GM12878 (cell line): ENCODE measurements at regions of chr3 and their contacts with region 1.

Region 1: GRCh38 chr3:99172736-99173657 is 271.5 kb upstream of the DCBLD2 start:
- DNase-seq: peak; percentile 9
- ATAC-seq: peak; percentile 88
- H3K4me3 ChIP-seq: no peak overlapping the region
- H3K27ac ChIP-seq: no peak overlapping the region
- H3K4me1 ChIP-seq: no peaks in the 10 kb centered on the region
- H3K27me3 ChIP-seq: no peaks in the 10 kb centered on the region
- CTCF ChIP-seq: peak; percentile 65 to 73 (median 68)
- EP300 ChIP-seq: no peak
- POLR2A ChIP-seq: no peak
- RAD21 ChIP-seq: peak; percentile 73

Region 2: DNA sequence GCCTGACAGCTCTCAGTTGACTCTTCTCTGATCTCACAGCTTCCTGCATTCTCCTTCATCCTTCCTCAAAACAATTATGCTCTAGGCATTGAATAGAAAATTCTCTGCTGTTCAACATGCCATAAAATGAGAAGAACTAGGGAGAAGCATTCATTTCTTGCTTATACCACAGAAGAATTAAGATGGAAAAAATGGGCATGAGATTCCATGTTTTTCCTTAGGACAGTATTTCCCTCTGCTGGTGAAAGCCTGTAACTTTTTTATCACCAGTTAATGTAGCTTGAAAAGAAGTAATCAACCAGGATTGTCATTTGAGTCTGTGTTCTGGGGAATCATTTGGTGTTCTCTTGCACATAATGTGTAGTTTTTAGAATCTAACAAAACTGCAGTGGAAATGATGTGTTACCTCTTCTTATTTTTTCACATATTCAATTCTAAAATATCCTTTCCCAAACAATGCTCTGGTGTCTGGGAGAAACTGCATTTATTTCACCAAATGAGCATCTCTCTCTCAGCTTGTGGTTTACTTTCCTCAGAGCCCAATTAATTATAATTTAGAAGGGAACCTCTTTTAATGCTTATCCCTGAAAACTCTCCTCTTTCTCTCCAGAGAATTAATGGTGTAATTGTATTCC is 178.8 kb before region 1 on chr3:
- CTCF ChIA-PET with region 1: interaction called, 10 read pairs
- POLR2A ChIA-PET with region 1: no interaction called
- RAD21 ChIA-PET with region 1: no interaction called
- SMC1A ChIA-PET with region 1: no interaction called
- in situ Hi-C with region 1: no loop called
- intact Hi-C with region 1: loop called (anchors 10 kb)
- DNase-seq: no peak
- ATAC-seq: no peak
- H3K4me3 ChIP-seq: no peak overlapping the region
- H3K27ac ChIP-seq: no peak overlapping the region
- H3K4me1 ChIP-seq: no peaks in the 10 kb centered on the region
- H3K27me3 ChIP-seq: no peaks in the 10 kb centered on the region; a peak in 1 of 4 replicates
- CTCF ChIP-seq: peak; percentile 36 to 54 (median 47); a peak in 5 of 6 replicates
- EP300 ChIP-seq: no peak
- POLR2A ChIP-seq: no peak
- RAD21 ChIP-seq: peak; percentile 60

Region 3: GRCh38 chr3:99023590-99024192 is 149.3 kb before region 1 on chr3:
- CTCF ChIA-PET with region 1: interaction called, 14 read pairs
- POLR2A ChIA-PET with region 1: no interaction called
- RAD21 ChIA-PET with region 1: interaction called, 9 read pairs
- SMC1A ChIA-PET with region 1: interaction called, 24 read pairs
- in situ Hi-C with region 1: loop called (anchors 5 kb)
- intact Hi-C with region 1: loop called (anchors 1 kb)
- DNase-seq: no peak
- ATAC-seq: peak; percentile 60; the same call in 2 of the 3 replicates
- H3K4me3 ChIP-seq: no peak overlapping the region
- H3K27ac ChIP-seq: no peak overlapping the region
- H3K4me1 ChIP-seq: no peaks in the 10 kb centered on the region
- H3K27me3 ChIP-seq: no peaks in the 10 kb centered on the region
- CTCF ChIP-seq: peak; percentile 53 to 68 (median 60)
- EP300 ChIP-seq: no peak
- POLR2A ChIP-seq: no peak
- RAD21 ChIP-seq: peak; percentile 81

Region 4: GRCh38 chr3:99114565-99115291 is 58.3 kb before region 1 on chr3:
- CTCF ChIA-PET with region 1: interaction called, 5 read pairs
- POLR2A ChIA-PET with region 1: no interaction called
- RAD21 ChIA-PET with region 1: no interaction called
- SMC1A ChIA-PET with region 1: no interaction called
- in situ Hi-C with region 1: no loop called
- intact Hi-C with region 1: loop called (anchors 5 kb)
- DNase-seq: no peak
- ATAC-seq: peak; percentile 87
- H3K4me3 ChIP-seq: no peak overlapping the region
- H3K27ac ChIP-seq: no peak overlapping the region
- H3K4me1 ChIP-seq: no peaks in the 10 kb centered on the region
- H3K27me3 ChIP-seq: no peaks in the 10 kb centered on the region
- CTCF ChIP-seq: peak; percentile 34 to 72 (median 61); a peak in 5 of 6 replicates
- EP300 ChIP-seq: no peak
- POLR2A ChIP-seq: no peak
- RAD21 ChIP-seq: peak; percentile 98

Region 5: GRCh38 chr3:99186016-99186415 is 13.0 kb after region 1 on chr3:
- CTCF ChIA-PET with region 1: interaction called, 12 read pairs
- POLR2A ChIA-PET with region 1: no interaction called
- RAD21 ChIA-PET with region 1: interaction called, 4 read pairs
- SMC1A ChIA-PET with region 1: interaction called, 7 read pairs
- in situ Hi-C with region 1: no loop called
- intact Hi-C with region 1: no loop called
- DNase-seq: no peak
- ATAC-seq: no peak
- H3K4me3 ChIP-seq: no peak overlapping the region
- H3K27ac ChIP-seq: no peak overlapping the region
- H3K4me1 ChIP-seq: no peaks in the 10 kb centered on the region
- H3K27me3 ChIP-seq: no peaks in the 10 kb centered on the region
- CTCF ChIP-seq: no peak
- EP300 ChIP-seq: no peak
- POLR2A ChIP-seq: no peak
- RAD21 ChIP-seq: no peak